Prostate gland (tissue), 2 donors: ENCODE measurements at regions of chr3 and their contacts with region 1.

Region 1: GRCh38 chr3:185498503-185499396 is at the start of gene TMEM41A:
- DNase-seq: peak; percentile 95
- H3K4me3 ChIP-seq: peak within 1 kb of the TSS; percentile 90
- H3K27ac ChIP-seq: peak within 1 kb of the TSS; percentile 86 to 95
- H3K4me1 ChIP-seq: no peaks in the 10 kb centered on the region
- H3K27me3 ChIP-seq: no peaks in the 10 kb centered on the region
- CTCF ChIP-seq: peak in 2 of 4 experiments; percentile 10 to 19
- POLR2A ChIP-seq: peak; percentile 92
- total RNA-seq, gene TMEM41A: 16.4 to 24.5 TPM

Region 2: GRCh38 chr3:185282696-185283394 is 215.9 kb before region 1 on chr3:
- intact Hi-C with region 1: loop called (anchors 10 kb)
- DNase-seq: peak; percentile 98
- H3K4me3 ChIP-seq: peak overlapping the region; percentile 59 to 61
- H3K27ac ChIP-seq: peak overlapping the region; percentile 73 to 76
- H3K4me1 ChIP-seq: no peaks in the 10 kb centered on the region
- H3K27me3 ChIP-seq: no peaks in the 10 kb centered on the region
- CTCF ChIP-seq: peak in 2 of 4 experiments; percentile 36 to 37
- POLR2A ChIP-seq: peak; percentile 83